Thyroid gland (tissue), 4 donors: ENCODE measurements at regions of chr1 and their contacts with region 1.

Region 1: GRCh38 chr1:182601416-182601786 is 2.8 kb downstream of the RGS16 start:
- DNase-seq: peak; percentile 83 to 84
- H3K4me3 ChIP-seq: peak overlapping the region in 1 of 3 donors; percentile 88
- H3K27ac ChIP-seq: peak overlapping the region; percentile 86 to 95 (median 90)
- H3K4me1 ChIP-seq: peaks cover 28 to 51% of the 10 kb centered on the region in 2 donors
- H3K27me3 ChIP-seq: no peaks in the 10 kb centered on the region
- CTCF ChIP-seq: peak; percentile 63 to 98 (median 94)
- POLR2A ChIP-seq: no peak

Region 2: GRCh38 chr1:182781841-182782586 is 180.6 kb after region 1 on chr1:
- intact Hi-C with region 1: loop called (anchors 2 kb)
- DNase-seq: peak; percentile 85 to 88
- H3K4me3 ChIP-seq: no peak overlapping the region
- H3K27ac ChIP-seq: peak overlapping the region in 1 of 3 donors; percentile 3
- H3K4me1 ChIP-seq: peaks cover 3 to 10% of the 10 kb centered on the region in 2 donors
- H3K27me3 ChIP-seq: no peaks in the 10 kb centered on the region
- CTCF ChIP-seq: peak; percentile 66 to 87 (median 82)
- POLR2A ChIP-seq: no peak